ENCODE measurements at regions of chr15 and their contacts with region 1.

Region 1: DNA sequence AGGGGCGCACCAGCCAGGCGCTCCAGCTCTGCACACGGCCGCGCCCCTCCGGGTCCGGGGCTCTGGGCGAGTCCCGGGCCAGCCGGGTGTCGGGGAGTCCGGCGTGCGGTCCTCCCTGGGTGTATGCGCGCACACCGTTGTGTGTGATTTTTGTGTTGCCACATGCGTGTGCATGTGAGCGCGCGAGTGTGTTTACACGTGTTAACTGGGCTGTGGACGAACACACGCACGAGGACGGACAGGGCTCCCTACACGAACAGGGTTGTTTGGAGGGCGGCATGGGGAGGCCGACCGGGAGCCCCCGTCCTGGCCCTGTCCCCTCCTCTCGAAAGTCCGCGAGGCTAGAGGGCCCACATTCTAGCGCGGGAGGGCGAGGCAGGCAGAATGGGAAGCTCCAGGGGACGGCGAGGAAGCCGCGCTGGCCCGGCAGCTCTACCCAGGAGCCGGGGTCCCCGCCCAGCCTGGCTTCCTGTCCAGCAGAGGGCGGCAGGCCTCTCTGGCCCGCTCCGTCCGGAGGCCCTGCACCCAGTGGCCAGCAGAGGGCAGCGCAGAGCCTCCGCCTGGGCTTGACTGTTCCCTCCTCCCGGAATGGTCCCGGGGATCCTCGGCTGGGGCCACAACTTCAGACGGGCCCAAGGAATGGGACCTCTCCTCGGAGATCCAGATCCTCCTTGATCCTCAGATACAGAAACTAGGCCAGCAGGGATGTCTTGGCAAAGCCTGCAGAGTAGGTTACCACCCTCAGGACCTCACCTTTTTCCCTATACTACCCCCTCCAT is 611 bp upstream of the LINGO1 start:
- DNase-seq: peak; percentile 69
- H3K4me3 ChIP-seq: no peak overlapping the region
- H3K27ac ChIP-seq: no peak overlapping the region
- H3K4me1 ChIP-seq: no peaks in the 10 kb centered on the region
- CTCF ChIP-seq: peak; percentile 96

Region 2: GRCh38 chr15:77607111-77607893 is 26.0 kb before region 1 on chr15:
- CTCF ChIA-PET with region 1: no interaction called
- POLR2A ChIA-PET with region 1: no interaction called
- intact Hi-C with region 1: no loop called
- DNase-seq: no peak
- H3K4me3 ChIP-seq: no peak overlapping the region
- H3K27ac ChIP-seq: no peak overlapping the region
- H3K4me1 ChIP-seq: peaks cover 3% of the 10 kb centered on the region
- CTCF ChIP-seq: no peak

Region 3: DNA sequence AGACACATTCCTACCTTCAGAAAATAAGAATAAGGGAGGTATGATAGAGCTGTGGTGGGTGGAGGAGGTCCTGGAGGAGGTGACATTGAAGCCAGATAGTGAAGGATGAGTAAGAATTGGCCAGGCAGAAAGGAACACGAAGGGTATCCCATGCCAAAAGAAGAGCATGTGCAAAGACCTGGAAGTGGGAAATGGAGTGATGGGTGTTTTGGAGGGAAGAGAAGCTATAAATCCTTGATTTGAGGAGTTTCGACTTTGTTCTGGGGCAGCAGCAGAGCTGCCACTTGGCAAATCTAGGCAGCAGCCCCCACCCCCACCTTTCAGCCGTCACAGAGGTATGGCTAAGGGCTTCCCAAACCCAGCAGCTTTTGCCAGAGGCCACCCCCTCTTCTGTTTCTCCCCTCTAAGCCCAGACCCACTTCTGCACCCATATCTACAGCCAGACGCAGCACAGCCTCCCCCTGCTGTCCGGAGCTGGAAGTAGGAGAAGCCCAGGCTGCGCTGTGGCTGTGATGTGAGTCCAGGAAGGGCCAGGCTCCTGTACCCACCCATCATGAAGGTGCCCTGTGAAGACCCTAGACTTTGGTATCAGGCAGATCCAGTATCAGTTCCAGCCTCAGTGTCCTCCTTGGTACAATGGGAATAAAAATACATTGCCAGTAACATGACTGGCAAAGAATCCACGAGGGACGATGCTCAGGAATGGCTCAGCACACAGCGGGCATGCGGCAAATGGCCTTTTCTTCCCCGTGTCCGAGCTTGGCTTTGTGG is 188.1 kb after region 1 on chr15:
- CTCF ChIA-PET with region 1: no interaction called
- POLR2A ChIA-PET with region 1: no interaction called
- intact Hi-C with region 1: loop called (anchors 1 kb)
- DNase-seq: peak; percentile 64
- H3K4me3 ChIP-seq: no peak overlapping the region
- H3K27ac ChIP-seq: no peak overlapping the region
- H3K4me1 ChIP-seq: no peaks in the 10 kb centered on the region
- CTCF ChIP-seq: peak; percentile 83

Region 4: GRCh38 chr15:77874063-77874462 is 240.7 kb after region 1 on chr15:
- CTCF ChIA-PET with region 1: no interaction called
- POLR2A ChIA-PET with region 1: no interaction called
- intact Hi-C with region 1: loop called (anchors 2 kb)
- DNase-seq: no peak
- H3K4me3 ChIP-seq: no peak overlapping the region
- H3K27ac ChIP-seq: no peak overlapping the region
- H3K4me1 ChIP-seq: no peaks in the 10 kb centered on the region
- CTCF ChIP-seq: no peak